ENCODE measurements at regions of chr16 and their contacts with region 1.

Region 1: DNA sequence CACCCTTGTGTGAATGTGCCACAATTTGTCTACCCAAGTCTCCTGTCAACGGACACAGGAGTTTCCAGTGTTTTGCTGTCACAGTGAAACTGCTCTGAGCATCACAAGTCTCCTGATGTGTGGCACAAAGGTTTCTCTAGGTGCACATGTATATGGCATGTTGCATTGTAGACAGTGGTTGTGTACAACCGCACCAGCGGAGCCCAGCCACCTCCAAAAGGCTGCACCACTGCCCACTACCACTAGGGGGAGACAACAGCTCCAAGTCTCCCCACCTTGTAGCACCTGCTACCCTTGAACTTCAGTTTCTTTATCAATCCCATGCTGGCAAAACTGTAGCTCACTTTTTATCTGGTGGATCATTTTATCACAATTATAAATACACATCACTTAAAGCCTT is 95.5 kb upstream of the ZNF469 start:
- DNase-seq: peak; percentile 79 to 86 (median 83)
- ATAC-seq: peak; percentile 98
- H3K4me3 ChIP-seq: no peak overlapping the region
- H3K27ac ChIP-seq: no peak overlapping the region
- H3K4me1 ChIP-seq: peaks cover 14 to 22% of the 10 kb centered on the region in 2 experiments; a peak in 4 of 5 replicates
- H3K27me3 ChIP-seq: peaks cover 0 to 35% of the 10 kb centered on the region in 2 experiments; a peak in 4 of 5 replicates
- CTCF ChIP-seq: peak; percentile 90 to 98 (median 96)
- EP300 ChIP-seq: no peak
- POLR2A ChIP-seq: no peak
- RAD21 ChIP-seq: peak; percentile 61 to 90

Region 2: GRCh38 chr16:88376835-88377726 is 89.9 kb after region 1 on chr16:
- CTCF ChIA-PET with region 1: no interaction called
- POLR2A ChIA-PET with region 1: no interaction called
- in situ Hi-C with region 1: no loop called
- intact Hi-C with region 1: loop called (anchors 10 kb)
- DNase-seq: no peak
- ATAC-seq: no peak
- H3K4me3 ChIP-seq: no peak overlapping the region
- H3K27ac ChIP-seq: no peak overlapping the region
- H3K4me1 ChIP-seq: peaks cover 0 to 26% of the 10 kb centered on the region in 2 experiments; a peak in 2 of 5 replicates
- H3K27me3 ChIP-seq: peaks cover 37 to 63% of the 10 kb centered on the region in 2 experiments; a peak in 4 of 5 replicates
- CTCF ChIP-seq: no peak
- EP300 ChIP-seq: no peak
- POLR2A ChIP-seq: no peak
- RAD21 ChIP-seq: no peak

Region 3: GRCh38 chr16:88405216-88406060 is 118.2 kb after region 1 on chr16:
- CTCF ChIA-PET with region 1: no interaction called
- POLR2A ChIA-PET with region 1: no interaction called
- in situ Hi-C with region 1: no loop called
- intact Hi-C with region 1: loop called (anchors 10 kb)
- DNase-seq: no peak
- ATAC-seq: no peak
- H3K4me3 ChIP-seq: no peak overlapping the region
- H3K27ac ChIP-seq: no peak overlapping the region
- H3K4me1 ChIP-seq: peaks cover 0 to 48% of the 10 kb centered on the region in 2 experiments; a peak in 3 of 5 replicates
- H3K27me3 ChIP-seq: peaks cover 10 to 47% of the 10 kb centered on the region in 2 experiments
- CTCF ChIP-seq: no peak
- EP300 ChIP-seq: no peak
- POLR2A ChIP-seq: no peak
- RAD21 ChIP-seq: no peak

Region 4: DNA sequence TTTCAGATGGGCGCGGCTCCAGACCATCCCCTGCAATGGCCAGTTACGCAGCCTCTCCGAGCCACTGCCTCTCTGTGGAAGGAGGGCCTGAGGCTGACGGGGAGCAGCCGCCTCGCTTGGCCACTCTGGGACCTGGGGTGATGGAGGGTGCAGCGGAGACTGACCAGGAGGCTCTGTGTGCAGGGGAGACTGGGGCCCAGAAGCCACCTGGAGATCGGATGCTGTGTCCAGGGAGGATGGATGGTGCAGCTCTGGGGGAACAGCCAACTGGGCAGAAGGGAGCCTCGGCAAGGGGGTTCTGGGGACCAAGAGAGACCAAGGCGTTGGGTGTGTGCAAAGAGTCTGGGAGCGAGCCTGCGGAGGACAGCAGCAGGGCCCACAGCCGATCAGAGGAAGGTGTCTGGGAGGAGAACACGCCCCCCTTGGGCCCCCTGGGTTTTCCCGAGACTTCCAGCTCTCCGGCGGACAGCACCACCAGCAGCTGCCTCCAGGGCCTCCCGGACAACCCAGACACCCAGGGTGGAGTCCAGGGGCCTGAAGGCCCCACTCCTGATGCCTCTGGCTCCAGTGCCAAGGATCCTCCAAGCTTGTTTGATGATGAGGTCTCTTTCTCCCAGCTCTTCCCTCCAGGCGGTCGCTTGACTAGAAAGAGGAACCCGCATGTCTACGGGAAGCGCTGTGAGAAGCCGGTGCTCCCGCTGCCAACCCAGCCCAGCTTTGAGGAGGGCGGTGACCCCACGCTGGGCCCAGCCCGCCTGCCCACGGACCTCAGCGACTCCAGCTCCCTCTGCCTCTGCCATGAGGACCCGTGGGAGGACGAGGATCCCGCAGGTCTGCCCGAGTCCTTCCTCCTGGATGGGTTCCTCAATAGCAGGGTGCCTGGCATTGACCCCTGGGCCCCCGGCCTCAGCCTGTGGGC is 148.5 kb after region 1 on chr16:
- CTCF ChIA-PET with region 1: no interaction called
- POLR2A ChIA-PET with region 1: no interaction called
- in situ Hi-C with region 1: no loop called
- intact Hi-C with region 1: loop called (anchors 2 kb)
- DNase-seq: no peak
- ATAC-seq: peak; percentile 14; the same call in 2 of the 3 replicates
- H3K4me3 ChIP-seq: no peak overlapping the region
- H3K27ac ChIP-seq: no peak overlapping the region
- H3K4me1 ChIP-seq: peaks cover 0 to 81% of the 10 kb centered on the region in 2 experiments; a peak in 2 of 5 replicates
- H3K27me3 ChIP-seq: peaks cover 29 to 69% of the 10 kb centered on the region in 2 experiments; a peak in 4 of 5 replicates
- CTCF ChIP-seq: no peak
- EP300 ChIP-seq: no peak
- POLR2A ChIP-seq: no peak
- RAD21 ChIP-seq: no peak

Measured in K562 (cell line).